PC-9 (cell line): ENCODE measurements at regions of chr7 and their contacts with region 1.

Region 1: DNA sequence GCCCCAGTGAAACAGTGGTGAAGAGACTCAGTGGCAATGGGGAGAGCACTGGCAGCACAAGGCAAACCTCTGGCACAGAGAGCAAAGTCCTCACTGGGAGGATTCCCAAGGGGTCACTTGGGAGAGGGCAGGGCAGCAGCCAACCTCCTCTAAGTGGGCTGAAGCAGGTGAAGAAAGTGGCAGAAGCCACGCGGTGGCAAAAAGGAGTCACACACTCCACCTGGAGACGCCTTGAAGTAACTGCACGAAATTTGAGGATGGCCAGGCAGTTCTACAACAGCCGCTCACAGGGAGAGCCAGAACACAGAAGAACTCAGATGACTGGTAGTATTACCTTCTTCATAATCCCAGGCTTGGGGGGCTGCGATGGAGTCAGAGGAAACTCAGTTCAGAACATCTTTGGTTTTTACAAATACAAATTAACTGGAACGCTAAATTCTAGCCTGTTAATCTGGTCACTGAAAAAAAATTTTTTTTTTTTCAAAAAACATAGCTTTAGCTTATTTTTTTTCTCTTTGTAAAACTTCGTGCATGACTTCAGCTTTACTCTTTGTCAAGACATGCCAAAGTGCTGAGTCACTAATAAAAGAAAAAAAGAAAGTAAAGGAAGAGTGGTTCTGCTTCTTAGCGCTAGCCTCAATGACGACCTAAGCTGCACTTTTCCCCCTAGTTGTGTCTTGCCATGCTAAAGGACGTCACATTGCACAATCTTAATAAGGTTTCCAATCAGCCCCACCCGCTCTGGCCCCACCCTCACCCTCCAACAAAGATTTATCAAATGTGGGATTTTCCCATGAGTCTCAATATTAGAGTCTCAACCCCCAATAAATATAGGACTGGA is 435 bp upstream of the IL6 start:
- DNase-seq: peak; percentile 81 to 86
- H3K4me3 ChIP-seq: peak overlapping the region; percentile 45; the same call in 1 of the 2 replicates
- H3K27ac ChIP-seq: peak overlapping the region; percentile 73
- H3K4me1 ChIP-seq: peaks cover 48% of the 10 kb centered on the region
- H3K27me3 ChIP-seq: no peaks in the 10 kb centered on the region
- CTCF ChIP-seq: peak; percentile 85

Region 2: DNA sequence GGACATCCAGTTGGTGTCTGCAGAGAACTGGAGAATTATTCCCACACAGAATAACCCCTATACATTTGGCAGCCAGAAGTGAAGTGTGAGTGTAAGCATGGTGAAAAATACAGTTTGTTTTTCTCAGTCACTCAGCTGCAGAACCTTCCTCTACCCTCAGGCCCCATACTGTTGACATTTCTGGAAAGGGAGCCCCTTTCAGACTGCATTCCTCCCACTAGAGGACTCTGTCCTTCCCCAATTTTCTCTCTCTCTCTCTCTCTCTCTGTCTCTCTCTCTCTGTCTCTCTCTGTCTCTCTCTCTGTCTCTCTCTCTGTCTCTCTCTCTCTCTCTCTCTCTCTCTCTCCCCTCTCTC is 139.8 kb before region 1 on chr7:
- CTCF ChIA-PET with region 1: interaction called, 8 read pairs
- POLR2A ChIA-PET with region 1: interaction called, 6 read pairs
- intact Hi-C with region 1: loop called (anchors 1 kb)
- DNase-seq: peak in 1 of 2 experiments; percentile 67
- H3K4me3 ChIP-seq: no peak overlapping the region
- H3K27ac ChIP-seq: no peak overlapping the region
- H3K4me1 ChIP-seq: peaks cover 46% of the 10 kb centered on the region
- H3K27me3 ChIP-seq: no peaks in the 10 kb centered on the region
- CTCF ChIP-seq: peak; percentile 83

Region 3: DNA sequence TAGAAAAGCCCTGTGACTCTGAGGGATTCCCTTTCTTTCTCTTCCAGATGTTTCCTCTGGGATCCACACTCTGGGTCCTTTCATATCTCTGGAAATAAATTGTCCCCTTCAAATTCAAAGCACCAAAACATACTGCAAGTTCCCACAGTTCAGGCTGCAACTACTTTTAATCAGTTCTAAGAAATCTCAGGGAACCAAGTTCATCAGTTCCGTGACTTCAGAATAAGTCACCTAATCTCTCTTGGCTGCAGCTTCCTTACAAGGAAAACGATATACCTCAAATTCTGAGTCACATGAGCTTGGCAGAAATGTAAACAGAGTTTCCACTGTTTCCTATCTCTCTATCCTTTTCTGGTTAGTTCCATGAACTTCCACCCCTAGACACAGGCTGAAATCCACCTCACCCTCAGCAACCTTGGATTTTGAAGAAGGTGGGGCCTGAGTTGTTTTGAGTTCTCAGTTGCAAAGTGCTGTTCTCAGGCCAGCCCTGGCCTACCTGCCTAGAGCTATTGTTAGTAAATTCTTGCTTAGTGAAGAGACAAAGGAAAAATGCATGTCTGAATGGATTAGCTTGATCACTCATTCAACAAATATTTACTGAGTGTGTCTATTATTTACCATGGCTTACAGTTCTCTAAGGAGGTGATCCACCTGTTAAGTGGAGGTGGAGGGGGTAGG is 58.9 kb before region 1 on chr7:
- CTCF ChIA-PET with region 1: interaction called, 7 read pairs
- POLR2A ChIA-PET with region 1: interaction called, 13 read pairs
- intact Hi-C with region 1: loop called (anchors 1 kb)
- DNase-seq: peak; percentile 87 to 100
- H3K4me3 ChIP-seq: no peak overlapping the region; the same call in 1 of the 2 replicates
- H3K27ac ChIP-seq: peak overlapping the region; percentile 94
- H3K4me1 ChIP-seq: peaks cover 71% of the 10 kb centered on the region
- H3K27me3 ChIP-seq: no peaks in the 10 kb centered on the region
- CTCF ChIP-seq: no peak

Region 4: DNA sequence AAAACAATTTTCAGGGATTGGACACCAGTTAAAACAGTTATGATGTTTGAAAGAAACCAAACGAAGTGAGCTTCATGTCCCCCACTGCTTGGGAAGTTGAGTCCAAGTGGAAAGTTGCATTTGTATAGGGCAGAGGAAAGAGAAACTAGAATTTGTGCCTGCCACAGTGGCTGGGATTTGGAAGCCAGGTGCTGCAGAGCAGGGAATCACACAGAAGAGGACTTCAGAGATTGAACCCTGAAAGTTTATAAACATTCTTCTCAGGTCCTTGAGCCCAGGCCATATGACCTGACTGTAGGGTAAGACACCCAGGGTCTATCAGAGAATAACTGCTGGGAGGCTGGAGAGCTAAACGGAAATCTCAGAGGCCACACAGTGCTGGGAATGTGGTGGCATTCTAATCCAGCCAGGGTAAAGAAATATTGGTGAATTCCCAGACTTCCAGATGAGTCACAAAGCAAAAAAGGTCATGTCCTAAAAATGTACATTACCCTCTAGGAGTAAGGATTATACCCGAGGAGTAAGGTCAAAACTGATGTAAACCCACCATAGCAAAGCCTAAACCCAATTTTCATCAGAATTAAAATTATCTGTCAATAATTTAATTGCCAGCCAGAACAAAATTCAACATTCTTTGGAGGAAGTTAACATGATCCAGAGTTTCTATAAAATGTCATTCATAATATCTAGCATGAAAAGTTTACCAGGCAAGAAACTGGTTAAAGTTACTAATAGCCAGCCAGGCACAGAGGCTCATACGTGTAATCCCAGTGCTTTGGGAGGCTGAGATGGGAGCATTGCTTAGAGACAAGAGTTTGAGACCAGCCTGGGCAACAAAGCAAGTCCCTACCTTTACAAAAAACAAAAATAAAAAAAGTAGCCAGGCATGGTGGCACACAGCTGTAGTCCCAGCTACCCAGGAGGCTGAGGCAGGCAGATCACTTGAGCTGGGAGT is 64.9 kb after region 1 on chr7:
- CTCF ChIA-PET with region 1: interaction called, 15 read pairs
- POLR2A ChIA-PET with region 1: no interaction called
- intact Hi-C with region 1: no loop called
- DNase-seq: no peak
- H3K4me3 ChIP-seq: no peak overlapping the region
- H3K27ac ChIP-seq: no peak overlapping the region
- H3K4me1 ChIP-seq: no peaks in the 10 kb centered on the region
- H3K27me3 ChIP-seq: no peaks in the 10 kb centered on the region
- CTCF ChIP-seq: no peak

Region 5: DNA sequence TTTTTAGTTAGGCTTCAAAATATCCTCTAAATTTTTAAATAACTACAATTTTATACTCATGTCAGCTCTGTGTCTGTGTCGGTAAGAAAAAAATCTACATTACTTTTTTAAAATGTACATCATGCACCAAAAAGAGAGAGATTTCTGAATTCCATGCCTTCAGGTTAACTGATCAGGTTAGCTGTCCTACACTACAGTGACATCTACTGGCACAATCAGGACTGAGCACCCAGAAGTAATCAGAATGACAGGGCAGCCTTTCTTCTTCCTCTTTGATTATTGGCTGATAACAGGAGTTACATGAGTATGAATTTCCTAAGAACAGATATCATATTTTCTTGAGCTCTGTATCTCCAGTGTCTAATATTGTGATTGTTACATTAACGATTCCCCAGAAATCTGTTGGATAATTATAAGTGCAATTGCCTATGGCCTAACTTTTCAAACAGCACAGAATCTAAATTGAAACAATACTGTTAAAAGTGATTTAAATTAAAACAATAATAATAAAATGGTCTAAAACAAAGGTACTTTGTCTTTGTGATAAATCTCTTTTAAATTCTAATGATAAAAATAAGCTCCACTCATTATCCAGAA is 329.1 kb after region 1 on chr7:
- CTCF ChIA-PET with region 1: interaction called, 20 read pairs
- POLR2A ChIA-PET with region 1: no interaction called
- intact Hi-C with region 1: loop called (anchors 1 kb)
- DNase-seq: peak; percentile 49 to 61
- H3K4me3 ChIP-seq: no peak overlapping the region
- H3K27ac ChIP-seq: no peak overlapping the region
- H3K4me1 ChIP-seq: no peaks in the 10 kb centered on the region
- H3K27me3 ChIP-seq: no peaks in the 10 kb centered on the region
- CTCF ChIP-seq: peak; percentile 98